ENCODE measurements at regions of chr11 and their contacts with region 1.

Region 1: DNA sequence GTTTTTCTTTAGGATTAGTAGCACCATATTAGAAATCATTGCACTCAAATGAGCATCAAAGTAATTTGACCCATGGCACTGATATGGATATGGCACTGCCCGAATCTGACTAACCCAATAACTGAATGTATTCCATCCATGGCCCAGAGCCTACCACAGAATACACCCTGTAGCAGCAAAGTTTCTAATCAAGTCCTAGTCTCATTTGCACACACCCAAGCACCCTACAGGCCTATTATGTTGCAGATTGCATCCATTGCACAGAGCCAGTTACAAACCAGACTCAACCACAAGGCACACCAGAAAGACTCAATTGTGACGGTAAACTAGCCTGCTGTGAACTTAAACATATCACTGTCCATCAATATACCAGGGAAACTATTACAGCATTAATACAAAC is 6.5 kb downstream of the OR52E5 start:
- DNase-seq: no peak

Region 2: GRCh38 chr11:5204787-5205186 is 694.7 kb before region 1 on chr11:
- intact Hi-C with region 1: loop called in 1 of 2 experiments (anchors 5 kb)
- DNase-seq: no peak

Region 3: DNA sequence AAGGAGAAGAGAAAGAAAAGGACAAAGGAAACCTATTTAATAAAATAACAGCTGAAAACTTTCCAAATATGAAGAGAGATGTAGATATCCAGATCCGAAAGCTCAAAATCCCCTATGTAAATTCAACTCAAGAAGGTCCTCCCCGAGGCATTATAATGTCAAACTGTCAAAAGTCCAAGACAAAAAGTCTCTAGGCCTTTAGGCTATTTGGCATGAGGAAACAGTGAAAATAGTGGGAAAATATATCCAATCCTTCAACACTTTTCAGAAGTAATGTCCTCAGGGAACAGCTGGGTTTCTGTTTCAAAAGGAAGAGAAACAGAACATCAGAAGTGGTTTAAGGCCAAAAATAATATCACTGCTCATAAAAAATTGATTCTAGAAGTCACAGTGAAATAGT is 21.0 kb before region 1 on chr11:
- intact Hi-C with region 1: no loop called
- DNase-seq: no peak

Region 4: DNA sequence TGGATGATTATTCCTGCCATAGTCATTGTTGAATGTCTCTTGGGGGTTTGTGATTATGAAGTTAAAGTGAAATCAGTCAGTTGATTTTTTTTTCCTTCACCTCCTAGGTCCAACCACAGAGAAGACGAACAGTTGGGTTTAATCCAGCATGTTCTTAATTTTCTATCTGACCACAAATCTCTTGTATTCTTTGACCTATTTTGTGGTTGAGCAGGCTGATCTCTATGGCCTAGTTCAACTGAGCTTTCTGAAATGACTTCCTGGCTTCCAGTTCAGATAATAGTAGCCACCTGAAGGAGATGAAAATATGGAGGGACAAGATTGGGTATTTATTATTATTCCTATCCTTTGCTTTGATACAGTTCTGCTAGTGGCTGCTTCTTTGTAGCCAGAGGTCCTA is 74.0 kb after region 1 on chr11:
- intact Hi-C with region 1: no loop called
- DNase-seq: no peak

Region 5: DNA sequence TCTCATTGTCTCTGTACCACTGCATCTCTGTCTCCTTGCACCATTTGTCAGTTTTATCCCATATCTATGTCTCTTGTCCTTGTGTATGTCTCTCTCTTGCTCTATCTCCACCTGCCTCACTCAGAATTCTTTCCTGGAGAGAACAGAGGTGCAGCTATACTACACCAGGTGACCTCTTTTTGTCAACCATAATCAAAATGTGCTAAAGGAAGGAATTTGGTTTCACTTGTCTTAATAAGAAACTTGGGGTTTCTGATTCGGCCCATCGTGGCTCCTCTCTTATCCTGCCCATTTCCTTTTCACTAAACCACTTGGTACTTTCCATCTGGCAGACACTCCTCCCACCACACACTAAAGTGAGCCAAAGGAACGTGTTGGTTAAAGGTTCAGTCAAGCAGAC is 303.8 kb after region 1 on chr11:
- intact Hi-C with region 1: no loop called
- DNase-seq: no peak

Region 6: GRCh38 chr11:6258571-6259081 is 359.1 kb after region 1 on chr11:
- intact Hi-C with region 1: no loop called
- DNase-seq: no peak

Measured in posterior vena cava (tissue), 2 donors.